PC-9 (cell line): ENCODE measurements at regions of chr12 and their contacts with region 1.

Region 1: DNA sequence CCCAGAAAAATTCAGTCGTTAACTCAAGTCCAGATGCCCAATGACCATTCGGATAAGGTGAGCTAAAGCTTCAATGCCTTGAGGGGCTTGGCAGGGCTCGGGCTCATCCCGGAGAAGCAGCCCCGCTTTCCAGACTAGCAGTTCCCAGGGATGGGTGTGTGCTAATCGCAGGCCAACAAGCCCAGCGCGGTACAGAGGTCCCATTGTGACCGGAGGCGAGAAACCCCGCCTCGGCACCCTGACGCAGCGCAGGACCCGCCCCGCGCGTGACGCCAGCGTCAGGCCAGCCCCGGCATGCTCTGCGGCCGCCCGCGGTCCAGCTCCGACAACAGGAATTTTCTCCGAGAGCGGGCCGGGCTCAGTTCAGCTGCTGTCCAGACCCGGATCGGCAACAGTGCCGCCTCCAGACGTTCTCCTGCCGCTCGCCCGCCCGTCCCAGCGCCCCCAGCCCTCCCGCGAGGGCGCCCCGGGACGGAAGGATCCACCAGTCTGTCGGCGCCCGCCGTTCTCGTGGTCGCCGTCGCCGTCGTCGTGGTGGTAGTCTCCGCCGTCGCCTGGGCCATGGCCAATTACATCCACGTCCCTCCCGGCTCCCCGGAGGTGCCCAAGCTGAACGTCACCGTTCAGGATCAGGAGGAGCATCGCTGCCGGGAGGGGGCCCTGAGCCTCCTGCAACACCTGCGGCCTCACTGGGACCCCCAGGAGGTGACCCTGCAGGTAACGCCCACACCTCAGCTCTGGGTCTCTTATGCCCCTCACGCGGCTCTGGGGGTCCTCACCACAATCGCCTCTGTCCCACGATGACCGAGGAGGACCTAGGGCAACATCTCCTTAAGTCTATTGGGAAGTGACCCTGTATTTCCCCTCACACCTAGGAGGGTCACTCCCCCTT is at the start of gene ETNK1:
- DNase-seq: peak; percentile 81 to 97
- H3K4me3 ChIP-seq: peak within 1 kb of the TSS; percentile 98
- H3K27ac ChIP-seq: peak within 1 kb of the TSS; percentile 85
- H3K4me1 ChIP-seq: peaks cover 38% of the 10 kb centered on the region
- H3K27me3 ChIP-seq: no peaks in the 10 kb centered on the region
- CTCF ChIP-seq: no peak
- total RNA-seq, gene ETNK1: 64.0 and 87.9 TPM in 2 replicates

Region 2: GRCh38 chr12:21642707-21643389 is 982.3 kb before region 1 on chr12:
- CTCF ChIA-PET with region 1: no interaction called
- POLR2A ChIA-PET with region 1: interaction called, 10 read pairs
- intact Hi-C with region 1: no loop called
- DNase-seq: no peak
- H3K4me3 ChIP-seq: no peak overlapping the region
- H3K27ac ChIP-seq: no peak overlapping the region
- H3K4me1 ChIP-seq: peaks cover 21% of the 10 kb centered on the region
- H3K27me3 ChIP-seq: no peaks in the 10 kb centered on the region
- CTCF ChIP-seq: no peak

Region 3: DNA sequence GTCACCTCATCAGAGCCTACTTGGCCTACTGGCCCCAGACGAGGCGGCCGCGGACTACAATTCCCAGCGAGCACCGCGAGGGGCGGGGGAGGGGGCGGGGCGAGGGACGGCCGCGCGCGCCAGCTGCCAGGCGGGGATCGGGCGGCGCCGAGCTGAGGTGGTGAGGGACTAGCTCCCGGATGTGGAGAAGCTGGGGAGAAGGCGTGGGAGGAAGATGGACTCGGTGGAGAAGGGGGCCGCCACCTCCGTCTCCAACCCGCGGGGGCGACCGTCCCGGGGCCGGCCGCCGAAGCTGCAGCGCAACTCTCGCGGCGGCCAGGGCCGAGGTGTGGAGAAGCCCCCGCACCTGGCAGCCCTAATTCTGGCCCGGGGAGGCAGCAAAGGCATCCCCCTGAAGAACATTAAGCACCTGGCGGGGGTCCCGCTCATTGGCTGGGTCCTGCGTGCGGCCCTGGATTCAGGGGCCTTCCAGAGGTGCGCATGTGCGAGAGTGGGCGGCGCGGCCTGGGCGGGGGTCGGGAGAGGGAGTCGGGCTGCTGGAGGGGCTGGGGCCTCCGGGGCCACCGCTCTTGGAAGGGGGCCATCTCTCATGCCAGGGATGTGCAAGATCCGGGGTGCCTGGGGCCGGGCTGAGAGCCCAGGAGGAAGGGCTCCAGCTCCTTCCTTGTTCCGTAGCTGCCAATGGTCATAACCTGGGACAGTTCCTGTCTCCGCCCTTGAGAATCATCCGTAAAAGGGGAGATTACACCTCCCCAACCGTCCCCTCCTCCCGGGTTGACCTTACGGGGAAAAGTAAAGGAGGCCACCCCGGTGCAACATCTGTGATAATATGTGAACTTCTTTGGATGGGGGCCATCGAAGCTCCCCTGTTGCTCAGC is 578.8 kb before region 1 on chr12 and contains the start of gene CMAS:
- CTCF ChIA-PET with region 1: no interaction called
- POLR2A ChIA-PET with region 1: no interaction called
- intact Hi-C with region 1: loop called (anchors 5 kb)
- DNase-seq: peak; percentile 62 to 78
- H3K4me3 ChIP-seq: peak within 1 kb of the TSS; percentile 60
- H3K27ac ChIP-seq: peak within 1 kb of the TSS; percentile 80
- H3K4me1 ChIP-seq: peaks cover 57% of the 10 kb centered on the region
- H3K27me3 ChIP-seq: no peaks in the 10 kb centered on the region
- CTCF ChIP-seq: no peak
- total RNA-seq, gene CMAS: 79.1 and 93.2 TPM in 2 replicates

Region 4: DNA sequence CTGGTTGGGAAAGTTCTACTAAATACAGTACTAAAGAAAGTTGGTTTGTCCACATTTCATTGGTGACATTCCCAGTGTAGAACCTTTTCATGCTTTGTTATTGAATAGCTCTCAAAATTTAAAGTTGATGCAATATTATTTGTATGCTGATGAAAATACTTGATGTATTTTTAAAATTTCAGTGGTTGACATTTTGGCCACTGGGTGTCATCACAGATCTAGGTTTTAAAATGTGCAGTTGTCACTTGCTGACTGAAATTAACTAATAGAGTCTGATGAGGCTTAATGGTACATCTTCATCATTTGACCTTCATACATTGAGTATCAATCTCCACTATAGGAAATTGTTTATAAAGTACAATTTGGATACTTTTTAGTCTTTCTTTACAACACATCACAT is 541.9 kb before region 1 on chr12:
- CTCF ChIA-PET with region 1: no interaction called
- POLR2A ChIA-PET with region 1: no interaction called
- intact Hi-C with region 1: loop called (anchors 10 kb)
- DNase-seq: peak in 1 of 2 experiments; percentile 17
- H3K4me3 ChIP-seq: no peak overlapping the region
- H3K27ac ChIP-seq: no peak overlapping the region
- H3K4me1 ChIP-seq: no peaks in the 10 kb centered on the region
- H3K27me3 ChIP-seq: no peaks in the 10 kb centered on the region
- CTCF ChIP-seq: peak; percentile 80

Region 5: GRCh38 chr12:22409377-22410164 is 215.5 kb before region 1 on chr12:
- CTCF ChIA-PET with region 1: interaction called, 16 read pairs
- POLR2A ChIA-PET with region 1: no interaction called
- intact Hi-C with region 1: no loop called
- DNase-seq: no peak
- H3K4me3 ChIP-seq: no peak overlapping the region
- H3K27ac ChIP-seq: peak overlapping the region; percentile 84
- H3K4me1 ChIP-seq: peaks cover 46% of the 10 kb centered on the region
- H3K27me3 ChIP-seq: no peaks in the 10 kb centered on the region
- CTCF ChIP-seq: no peak

Region 6: DNA sequence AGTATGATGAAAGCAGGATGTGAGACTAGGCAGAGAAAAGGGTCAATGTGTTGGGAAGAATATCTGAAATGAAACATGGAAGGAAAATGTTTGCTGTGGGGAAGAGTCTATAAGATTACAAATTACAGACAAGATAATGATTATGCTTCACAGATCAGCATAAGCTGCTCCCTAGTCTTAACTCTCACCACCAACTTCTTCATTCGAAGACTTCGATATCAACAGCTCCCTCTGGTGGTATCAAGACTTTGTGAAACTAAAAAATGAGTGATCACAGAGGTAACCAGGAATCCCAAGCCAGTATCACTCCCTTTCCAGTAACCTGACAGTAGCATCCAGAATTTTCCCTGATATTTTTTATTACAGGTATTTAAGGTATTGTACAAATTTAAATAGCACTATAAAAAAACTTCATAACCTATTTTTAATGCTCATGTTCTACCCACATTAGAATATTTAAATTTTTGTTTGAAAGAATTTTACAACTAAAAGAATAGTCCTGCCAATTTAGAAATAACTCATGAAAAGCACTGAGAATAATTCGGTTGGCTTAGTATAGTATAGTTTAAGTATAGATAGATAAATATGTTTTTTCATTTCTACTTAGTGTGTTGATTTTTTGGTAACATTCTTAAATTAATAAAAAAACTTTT is 165.2 kb before region 1 on chr12:
- CTCF ChIA-PET with region 1: no interaction called
- POLR2A ChIA-PET with region 1: no interaction called
- intact Hi-C with region 1: loop called (anchors 10 kb)
- DNase-seq: no peak
- H3K4me3 ChIP-seq: no peak overlapping the region
- H3K27ac ChIP-seq: no peak overlapping the region
- H3K4me1 ChIP-seq: no peaks in the 10 kb centered on the region
- H3K27me3 ChIP-seq: no peaks in the 10 kb centered on the region
- CTCF ChIP-seq: peak; percentile 71

Region 7: GRCh38 chr12:22544038-22544979 is 80.8 kb before region 1 on chr12 and contains the start of gene C2CD5:
- CTCF ChIA-PET with region 1: no interaction called
- POLR2A ChIA-PET with region 1: no interaction called
- intact Hi-C with region 1: loop called (anchors 1 kb)
- DNase-seq: peak; percentile 90 to 97
- H3K4me3 ChIP-seq: peak within 1 kb of the TSS; percentile 82
- H3K27ac ChIP-seq: peak within 1 kb of the TSS; percentile 71
- H3K4me1 ChIP-seq: peaks cover 9% of the 10 kb centered on the region; the same call in 1 of the 2 replicates
- H3K27me3 ChIP-seq: no peaks in the 10 kb centered on the region
- CTCF ChIP-seq: peak; percentile 32; the same call in 1 of the 2 replicates
- total RNA-seq, gene C2CD5: 27.5 and 28.6 TPM in 2 replicates

Region 8: DNA sequence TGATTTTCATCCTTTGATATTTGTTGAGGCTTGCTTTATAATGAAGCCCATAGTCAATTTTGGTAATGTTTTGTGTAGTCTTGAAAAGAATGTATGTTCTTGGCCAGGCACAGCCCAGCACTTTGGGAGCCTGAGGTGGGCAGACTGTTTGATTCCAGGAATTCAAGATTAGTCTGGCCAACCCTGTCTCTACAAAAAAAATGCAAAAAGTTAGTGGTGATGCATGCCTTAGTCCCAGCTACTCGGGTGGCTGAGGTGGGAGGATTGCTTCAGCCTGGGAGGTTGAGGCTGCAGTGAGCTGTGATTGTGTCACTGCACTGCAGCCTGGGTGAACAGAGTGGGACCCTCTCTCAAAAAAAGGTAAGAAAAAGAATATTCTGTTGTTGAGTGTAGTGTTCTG is 10.7 kb after region 1 on chr12:
- CTCF ChIA-PET with region 1: no interaction called
- POLR2A ChIA-PET with region 1: no interaction called
- intact Hi-C with region 1: no loop called
- DNase-seq: no peak
- H3K4me3 ChIP-seq: no peak overlapping the region
- H3K27ac ChIP-seq: no peak overlapping the region
- H3K4me1 ChIP-seq: no peaks in the 10 kb centered on the region
- H3K27me3 ChIP-seq: no peaks in the 10 kb centered on the region
- CTCF ChIP-seq: no peak

Region 9: DNA sequence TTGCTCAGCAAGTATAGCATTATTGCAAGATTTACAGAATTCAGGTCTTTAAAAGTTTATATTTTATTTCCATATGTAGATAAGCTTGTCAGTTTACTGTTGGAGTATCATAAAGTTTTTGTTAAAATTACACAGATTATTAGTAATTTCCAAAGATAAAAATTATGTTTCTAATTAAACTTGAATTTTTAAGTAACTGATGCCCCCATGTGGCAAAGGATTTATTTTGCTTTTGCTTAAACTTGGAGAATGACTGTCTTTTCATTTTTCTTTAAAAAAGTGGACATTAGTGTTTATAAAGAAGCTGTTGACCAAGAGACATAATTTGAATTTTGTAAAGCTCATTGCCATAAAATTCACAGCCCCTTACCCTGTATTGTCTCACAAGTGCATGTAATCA is 45.6 kb after region 1 on chr12:
- CTCF ChIA-PET with region 1: no interaction called
- POLR2A ChIA-PET with region 1: no interaction called
- intact Hi-C with region 1: no loop called
- DNase-seq: no peak
- H3K4me3 ChIP-seq: no peak overlapping the region
- H3K27ac ChIP-seq: no peak overlapping the region
- H3K4me1 ChIP-seq: no peaks in the 10 kb centered on the region
- H3K27me3 ChIP-seq: no peaks in the 10 kb centered on the region
- CTCF ChIP-seq: peak; percentile 52